ENCODE measurements at regions of chr6 and their contacts with region 1.

Region 1: DNA sequence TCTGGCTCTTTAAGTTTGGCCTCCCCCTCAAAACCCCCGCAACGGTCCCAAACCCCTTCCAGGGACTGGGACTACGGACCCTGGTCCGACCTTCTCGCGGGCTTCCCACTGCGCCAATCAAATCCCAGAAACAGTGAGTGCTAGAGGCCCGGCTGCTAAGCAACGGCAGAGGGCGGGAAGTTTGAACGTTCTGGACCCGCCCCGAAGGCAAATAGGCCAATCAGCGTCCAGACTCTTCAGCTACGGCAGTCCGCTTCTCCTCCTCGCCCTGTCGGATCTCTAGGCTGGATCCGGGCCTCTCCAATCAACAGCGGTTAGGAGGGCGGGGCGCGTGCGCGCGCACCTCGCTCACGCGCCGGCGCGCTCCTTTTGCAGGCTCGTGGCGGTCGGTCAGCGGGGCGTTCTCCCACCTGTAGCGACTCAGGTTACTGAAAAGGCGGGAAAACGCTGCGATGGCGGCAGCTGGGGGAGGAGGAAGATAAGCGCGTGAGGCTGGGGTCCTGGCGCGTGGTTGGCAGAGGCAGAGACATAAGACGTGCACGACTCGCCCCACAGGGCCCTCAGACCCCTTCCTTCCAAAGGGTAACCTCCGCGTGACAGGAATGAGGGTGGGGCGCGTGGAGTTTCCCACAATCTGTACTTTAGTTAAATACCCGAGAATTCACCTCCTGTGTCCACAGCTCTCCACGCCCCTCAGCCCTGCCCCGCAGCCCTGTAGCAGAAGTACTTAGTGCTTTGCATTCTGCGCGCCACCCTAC is at the start of gene MSH5:
- DNase-seq: peak; percentile 99

Region 2: GRCh38 chr6:31665501-31666336 is 74.1 kb before region 1 on chr6 and contains the start of gene CSNK2B:
- CTCF ChIA-PET with region 1: no interaction called
- POLR2A ChIA-PET with region 1: interaction called, 19 read pairs
- DNase-seq: peak; percentile 98

Region 3: DNA sequence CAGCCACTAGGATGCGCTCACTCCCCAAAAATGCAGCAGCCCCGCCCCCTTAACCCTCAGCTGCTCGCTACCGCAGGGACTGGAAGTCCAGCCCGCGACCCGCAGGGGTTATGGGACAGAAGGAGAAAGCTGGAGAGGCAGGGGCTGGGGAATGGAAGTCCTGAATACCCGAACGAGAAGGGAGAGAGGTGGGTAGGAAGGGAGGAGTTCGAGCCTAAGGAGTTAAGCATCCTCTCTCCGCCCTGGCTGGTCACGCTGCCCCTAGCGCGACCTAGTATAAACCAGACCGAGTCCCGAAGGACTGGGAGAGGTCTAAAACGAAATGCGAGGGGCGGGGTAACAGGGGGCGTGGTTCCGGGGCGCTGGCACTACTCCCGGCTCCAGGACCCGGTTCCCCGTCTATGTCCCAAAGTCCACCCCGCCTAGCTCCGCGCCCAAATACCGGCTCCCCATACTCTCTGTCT is 10.3 kb before region 1 on chr6:
- CTCF ChIA-PET with region 1: interaction called, 12 read pairs
- POLR2A ChIA-PET with region 1: interaction called, 40 read pairs
- DNase-seq: peak; percentile 77

Region 4: GRCh38 chr6:31758281-31758680 is 18.5 kb after region 1 on chr6:
- CTCF ChIA-PET with region 1: no interaction called
- POLR2A ChIA-PET with region 1: interaction called, 57 read pairs
- DNase-seq: no peak

Region 5: DNA sequence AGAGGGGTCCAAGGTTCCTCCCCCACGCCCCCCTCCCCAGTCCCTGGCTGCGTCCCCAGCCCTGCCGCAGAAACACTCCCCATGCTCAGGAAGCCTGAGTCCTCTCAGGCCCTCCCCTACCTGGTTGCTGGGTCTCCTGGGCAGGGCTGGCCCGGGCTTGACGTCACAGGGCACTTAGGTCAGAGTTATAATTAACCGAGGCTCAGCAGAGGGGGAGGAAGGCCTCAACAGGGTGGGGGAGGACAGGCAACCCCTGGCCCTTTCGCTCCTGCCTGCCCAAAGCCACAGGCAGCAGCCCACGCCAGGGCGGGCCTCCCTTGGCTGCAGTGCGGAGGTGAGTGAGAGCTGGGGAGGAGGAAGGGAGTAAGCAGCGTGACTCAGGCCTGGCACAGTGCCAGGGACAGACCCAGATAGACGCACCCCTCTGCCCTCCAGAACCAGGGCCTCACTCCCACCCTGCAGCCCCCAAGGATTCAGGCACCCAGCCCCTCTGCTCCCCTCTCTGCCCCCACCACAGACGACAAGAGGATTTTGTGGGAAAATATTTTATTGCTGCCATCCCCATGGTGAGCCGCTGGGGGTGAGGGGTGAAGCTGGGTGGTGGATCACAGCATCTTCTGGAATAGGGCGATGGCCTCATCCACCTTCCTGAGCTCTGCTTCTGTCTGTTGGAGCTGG is 37.3 kb after region 1 on chr6 and contains the start of gene VWA7:
- CTCF ChIA-PET with region 1: no interaction called
- POLR2A ChIA-PET with region 1: interaction called, 11 read pairs
- DNase-seq: peak; percentile 65

Region 6: DNA sequence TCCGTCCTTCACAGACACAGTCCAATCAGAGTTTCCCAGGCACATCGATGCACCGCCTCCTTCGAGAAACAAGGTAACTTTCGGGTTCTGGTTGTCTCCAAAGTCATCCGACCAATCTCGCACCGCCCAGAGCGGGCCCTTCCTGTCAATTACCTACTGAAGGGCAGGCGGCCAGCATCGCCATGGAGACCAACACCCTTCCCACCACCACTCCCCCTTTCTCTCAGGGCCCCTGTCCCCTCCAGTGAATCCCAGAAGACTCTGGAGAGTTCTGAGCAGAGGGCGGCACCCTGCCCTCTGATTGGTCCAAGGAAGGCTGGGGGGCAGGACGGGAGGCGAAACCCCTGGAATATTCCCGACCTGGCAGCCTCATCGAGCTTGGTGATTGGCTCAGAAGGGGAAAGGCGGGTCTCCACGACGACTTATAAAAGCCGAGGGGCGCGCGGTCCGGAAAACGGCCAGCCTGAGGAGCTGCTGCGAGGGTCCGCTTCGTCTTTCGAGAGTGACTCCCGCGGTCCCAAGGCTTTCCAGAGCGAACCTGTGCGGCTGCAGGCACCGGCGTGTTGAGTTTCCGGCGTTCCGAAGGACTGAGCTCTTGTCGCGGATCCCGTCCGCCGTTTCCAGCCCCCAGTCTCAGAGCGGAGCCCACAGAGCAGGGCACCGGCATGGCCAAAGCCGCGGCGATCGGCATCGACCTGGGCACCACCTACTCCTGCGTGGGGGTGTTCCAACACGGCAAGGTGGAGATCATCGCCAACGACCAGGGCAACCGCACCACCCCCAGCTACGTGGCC is 87.7 kb after region 1 on chr6 and contains the start of gene HSPA1B:
- CTCF ChIA-PET with region 1: interaction called, 4 read pairs
- POLR2A ChIA-PET with region 1: interaction called, 19 read pairs
- DNase-seq: peak; percentile 89

Region 7: GRCh38 chr6:31882344-31882743 is 142.5 kb after region 1 on chr6:
- CTCF ChIA-PET with region 1: no interaction called
- POLR2A ChIA-PET with region 1: no interaction called
- DNase-seq: no peak

Region 8: DNA sequence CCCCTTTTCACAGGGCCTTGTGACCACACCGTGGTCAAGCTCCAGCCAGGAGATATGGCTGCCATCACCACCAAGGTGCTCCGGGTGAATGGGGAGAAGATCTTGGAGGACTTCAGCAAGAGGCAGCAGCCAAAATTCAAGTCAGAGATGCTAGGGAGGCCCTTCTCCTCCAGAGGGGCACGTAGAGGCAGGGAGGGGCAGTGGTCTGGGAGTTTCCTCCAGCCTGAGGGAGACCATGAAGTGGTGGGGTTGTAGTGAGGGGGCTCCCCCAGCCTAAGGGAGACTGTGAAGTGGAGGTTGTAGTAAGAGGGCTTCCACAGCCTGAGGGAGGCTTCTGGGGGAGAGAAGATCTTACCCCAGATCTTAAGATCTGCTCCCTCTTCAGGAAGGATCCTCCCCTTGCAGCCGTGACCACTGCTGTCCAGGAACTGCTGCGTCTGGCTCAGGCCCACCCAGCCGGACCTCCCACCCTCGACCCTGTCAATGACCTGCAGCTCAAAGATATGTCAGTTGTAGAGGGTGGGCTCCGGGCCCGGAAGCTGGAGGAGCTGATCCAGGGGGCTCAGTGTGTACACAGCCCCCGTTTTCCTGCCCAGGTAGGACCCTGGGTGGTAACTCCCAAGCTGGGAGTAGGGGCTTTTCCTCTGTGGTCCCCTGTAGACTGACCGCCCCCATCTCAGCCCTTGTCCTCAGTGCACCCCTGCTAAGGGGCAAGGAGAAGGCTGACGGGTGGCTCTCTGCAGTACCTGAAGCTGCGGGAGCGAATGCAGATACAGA is 228.3 kb after region 1 on chr6:
- CTCF ChIA-PET with region 1: no interaction called
- POLR2A ChIA-PET with region 1: no interaction called
- DNase-seq: no peak

Measured in HEK293T (cell line).